ENCODE measurements at regions of chr19 and their contacts with region 1.

Region 1: DNA sequence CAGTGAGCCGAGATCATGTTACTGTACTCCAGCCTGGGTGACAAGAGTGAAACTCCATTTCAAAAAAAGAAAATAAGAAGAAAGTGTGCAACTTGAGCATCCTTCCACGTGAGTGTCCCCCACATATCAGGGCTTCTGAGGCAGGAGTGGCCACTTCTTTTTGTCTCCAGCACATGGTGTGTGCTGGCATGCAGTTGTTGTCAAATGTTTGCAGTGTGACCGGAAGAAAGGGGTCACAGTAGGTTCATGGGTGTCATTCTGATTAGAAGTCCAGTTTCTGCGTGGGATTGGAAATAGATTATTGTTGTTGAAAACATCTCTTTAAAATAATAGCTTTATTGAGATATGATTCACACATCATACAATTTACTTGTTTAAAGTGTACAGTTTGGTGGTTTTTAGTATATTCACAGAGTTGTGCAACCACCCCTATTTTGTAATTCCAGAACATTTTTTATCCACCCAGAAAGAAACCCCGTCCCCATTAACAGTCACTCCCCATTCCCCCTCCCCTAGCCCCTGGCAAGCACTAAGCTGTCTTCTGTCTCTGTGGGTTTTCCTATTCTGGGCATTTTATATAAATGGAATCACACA is 2.2 kb downstream of the CRTC1 start:
- DNase-seq: no peak
- H3K4me3 ChIP-seq: no peak overlapping the region
- H3K27ac ChIP-seq: no peak overlapping the region
- H3K4me1 ChIP-seq: peaks cover 0 to 33% (median 19%) of the 10 kb centered on the region in 4 donors
- H3K27me3 ChIP-seq: no peaks in the 10 kb centered on the region
- CTCF ChIP-seq: no peak

Region 2: DNA sequence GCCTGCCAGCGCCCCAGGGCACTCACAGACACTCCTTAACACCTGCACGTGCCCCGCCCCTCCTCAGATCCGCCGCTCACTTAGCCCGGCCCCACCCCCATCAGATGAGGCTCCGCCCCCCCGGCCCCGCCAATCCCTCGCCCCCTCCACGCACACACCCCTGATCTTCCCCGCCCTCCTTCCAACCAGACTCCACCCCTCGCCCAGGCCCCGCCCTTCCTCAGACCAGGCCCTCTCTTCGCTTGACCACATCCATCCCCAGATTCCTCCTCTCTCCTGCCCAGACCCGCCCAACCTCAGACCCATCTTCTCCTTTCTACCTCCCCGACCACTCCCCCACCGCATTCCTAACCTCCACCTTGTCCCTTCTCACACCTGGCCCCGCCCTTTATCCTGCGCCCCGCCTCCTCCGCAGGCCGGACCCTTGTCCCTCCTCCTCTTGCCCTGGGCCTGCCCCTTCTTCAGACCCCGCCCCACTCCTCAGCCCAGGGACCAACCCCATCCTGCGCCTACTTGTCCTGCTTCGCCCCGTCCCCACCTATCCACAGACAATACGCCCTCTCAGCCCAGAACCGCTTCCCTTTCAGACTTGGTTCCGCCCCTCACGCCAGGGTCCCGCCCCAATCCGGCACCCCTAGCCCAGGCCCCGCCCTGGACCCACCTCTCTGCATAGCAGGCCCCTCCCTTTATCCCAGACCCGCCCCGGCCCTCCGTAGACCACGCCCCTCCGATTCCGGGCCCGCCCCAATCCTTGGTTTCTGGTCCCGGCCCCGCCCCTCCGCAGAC is 49.3 kb before region 1 on chr19:
- intact Hi-C with region 1: no loop called
- DNase-seq: peak; percentile 98 to 99
- H3K4me3 ChIP-seq: peak overlapping the region; percentile 79 to 82
- H3K27ac ChIP-seq: peak overlapping the region; percentile 90
- H3K4me1 ChIP-seq: peaks cover 0 to 34% (median 16%) of the 10 kb centered on the region in 4 donors
- H3K27me3 ChIP-seq: no peaks in the 10 kb centered on the region
- CTCF ChIP-seq: no peak

Region 3: DNA sequence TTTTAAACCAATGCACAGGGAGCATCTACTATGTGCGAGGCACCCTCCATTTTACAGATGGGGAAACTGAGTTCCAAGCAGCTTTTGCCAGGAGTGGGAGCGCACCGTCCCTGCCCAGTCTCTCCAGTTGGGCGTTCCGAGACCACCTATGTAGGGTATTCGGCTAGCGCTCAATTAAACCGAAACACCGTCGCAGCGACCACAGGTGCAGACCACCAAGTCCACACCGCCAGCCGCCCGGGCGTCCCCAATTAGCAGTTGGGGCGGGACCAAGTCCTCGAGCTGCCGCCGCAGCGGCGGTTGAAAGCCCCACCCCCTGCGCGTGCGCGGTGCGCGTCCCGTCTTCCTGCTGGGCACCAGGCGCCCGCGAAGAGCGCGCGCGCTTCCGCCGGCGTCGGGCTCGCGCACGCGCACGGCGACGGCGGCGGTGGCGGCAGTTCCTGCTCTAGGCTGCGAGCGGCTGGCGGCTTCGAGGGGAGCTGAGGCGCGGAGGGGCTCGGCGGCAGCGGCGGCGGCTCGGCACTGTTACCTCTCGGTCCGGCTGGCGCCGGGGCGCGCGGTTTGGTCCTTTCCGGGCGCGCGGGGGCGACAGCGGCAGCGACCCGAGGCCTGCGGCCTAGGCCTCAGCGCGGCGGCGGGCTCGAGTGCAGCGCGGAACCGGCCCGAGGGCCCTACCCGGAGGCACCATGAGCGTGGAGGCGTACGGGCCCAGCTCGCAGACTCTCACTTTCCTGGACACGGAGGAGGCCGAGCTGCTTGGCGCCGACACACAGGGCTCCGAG is 146.0 kb after region 1 on chr19 and contains the start of gene UPF1:
- intact Hi-C with region 1: loop called (anchors 5 kb)
- DNase-seq: peak; percentile 89 to 95
- H3K4me3 ChIP-seq: peak within 1 kb of the TSS; percentile 72 to 97
- H3K27ac ChIP-seq: peak within 1 kb of the TSS; percentile 79 to 89
- H3K4me1 ChIP-seq: peaks cover 0 to 42% (median 26%) of the 10 kb centered on the region in 4 donors
- H3K27me3 ChIP-seq: no peaks in the 10 kb centered on the region
- CTCF ChIP-seq: peak; percentile 8 to 34

Measured in tibial artery (tissue), 4 donors.